B cell (primary cell): ENCODE measurements at regions of chr22 and their contacts with region 1.

Region 1: GRCh38 chr22:38755911-38756532 is at the start of gene SUN2:
- DNase-seq: peak; percentile 94
- ATAC-seq: peak; percentile 74
- H3K4me3 ChIP-seq: peak within 1 kb of the TSS; percentile 59 to 97 (median 82)
- H3K4me3 Mint-ChIP-seq: peak within 1 kb of the TSS; percentile 100
- H3K27ac ChIP-seq: peak within 1 kb of the TSS; percentile 71 to 81
- H3K27ac Mint-ChIP-seq: peak within 1 kb of the TSS; percentile 99
- H3K4me1 ChIP-seq: peaks cover 63 to 82% of the 10 kb centered on the region in 2 donors
- H3K4me1 Mint-ChIP-seq: peaks cover 65% of the 10 kb centered on the region
- H3K27me3 ChIP-seq: no peaks in the 10 kb centered on the region
- H3K27me3 Mint-ChIP-seq: no peaks in the 10 kb centered on the region
- CTCF ChIP-seq: no peak
- total RNA-seq, gene SUN2: 305 and 322 TPM in 2 replicates

Region 2: GRCh38 chr22:38681784-38682335 is 74.2 kb before region 1 on chr22 and contains the start of gene TOMM22:
- CTCF ChIA-PET with region 1: interaction called, 6 read pairs
- POLR2A ChIA-PET with region 1: interaction called, 4 read pairs
- intact Hi-C with region 1: loop called (anchors 2 kb)
- DNase-seq: peak; percentile 91
- ATAC-seq: peak; percentile 98
- H3K4me3 ChIP-seq: peak within 1 kb of the TSS; percentile 78 to 96 (median 87)
- H3K4me3 Mint-ChIP-seq: peak within 1 kb of the TSS; percentile 100
- H3K27ac ChIP-seq: peak within 1 kb of the TSS; percentile 70 to 88
- H3K27ac Mint-ChIP-seq: peak within 1 kb of the TSS; percentile 96
- H3K4me1 ChIP-seq: peaks cover 11 to 15% of the 10 kb centered on the region in 2 donors
- H3K4me1 Mint-ChIP-seq: peaks cover 22% of the 10 kb centered on the region
- H3K27me3 ChIP-seq: no peaks in the 10 kb centered on the region
- H3K27me3 Mint-ChIP-seq: no peaks in the 10 kb centered on the region
- CTCF ChIP-seq: peak; percentile 72
- total RNA-seq, gene TOMM22: 47.6 and 48.2 TPM in 2 replicates

Region 3: DNA sequence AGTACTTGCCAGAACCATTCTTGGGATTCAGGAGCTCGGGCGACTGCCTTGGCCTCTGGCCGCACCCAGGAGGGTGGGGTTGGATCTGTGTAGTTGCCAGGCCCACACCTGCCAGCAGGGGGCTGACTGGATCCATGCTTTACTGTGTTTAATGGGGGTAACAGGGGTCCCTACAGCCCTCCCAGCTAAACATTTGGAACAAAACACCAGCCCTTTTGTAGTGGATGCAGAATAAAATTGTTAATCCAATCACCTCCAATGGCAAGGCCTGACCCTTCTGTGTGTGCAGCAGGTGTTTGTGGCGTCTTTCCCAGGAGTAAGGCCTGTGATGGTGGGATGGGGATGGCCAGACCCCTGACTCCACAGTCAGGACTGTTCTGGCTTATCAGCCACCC is 22.7 kb before region 1 on chr22:
- CTCF ChIA-PET with region 1: interaction called, 14 read pairs
- POLR2A ChIA-PET with region 1: interaction called, 15 read pairs
- intact Hi-C with region 1: no loop called
- DNase-seq: peak; percentile 69
- ATAC-seq: peak; percentile 68
- H3K4me3 ChIP-seq: no peak overlapping the region
- H3K4me3 Mint-ChIP-seq: no peak overlapping the region
- H3K27ac ChIP-seq: peak overlapping the region in 1 of 2 donors; percentile 61
- H3K27ac Mint-ChIP-seq: peak overlapping the region; percentile 78
- H3K4me1 ChIP-seq: peaks cover 0 to 18% of the 10 kb centered on the region in 2 donors
- H3K4me1 Mint-ChIP-seq: peaks cover 33% of the 10 kb centered on the region
- H3K27me3 ChIP-seq: no peaks in the 10 kb centered on the region
- H3K27me3 Mint-ChIP-seq: no peaks in the 10 kb centered on the region
- CTCF ChIP-seq: peak; percentile 84

Region 4: DNA sequence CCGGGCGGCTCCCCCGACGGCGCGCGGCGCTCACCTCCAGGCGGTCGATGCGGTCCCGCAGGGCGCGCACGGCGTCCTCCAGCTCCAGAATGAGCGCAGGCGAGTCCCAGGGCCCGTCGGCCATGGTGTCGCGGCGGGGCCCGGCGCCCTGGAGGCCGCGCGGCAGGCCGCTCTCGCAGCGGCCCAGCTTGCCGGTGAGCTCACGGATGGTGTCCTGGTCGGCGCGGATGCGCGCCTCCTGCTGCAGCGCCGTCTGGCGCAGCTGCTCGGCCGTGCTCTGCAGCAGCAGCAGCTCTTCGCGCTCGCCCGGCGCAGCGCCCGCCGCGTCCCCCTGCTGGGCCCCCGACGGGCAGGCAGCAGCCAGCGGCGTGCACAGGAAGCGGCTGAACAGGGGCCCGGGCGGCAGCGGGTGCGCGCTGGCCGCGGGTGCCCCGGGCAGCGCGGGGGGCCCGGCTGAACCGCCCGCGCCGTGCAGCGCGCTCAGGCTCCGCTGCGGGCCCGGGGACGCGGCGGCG is 87.2 kb after region 1 on chr22:
- CTCF ChIA-PET with region 1: interaction called, 5 read pairs
- POLR2A ChIA-PET with region 1: no interaction called
- intact Hi-C with region 1: loop called (anchors 5 kb)
- DNase-seq: peak; percentile 77
- ATAC-seq: peak; percentile 78
- H3K4me3 ChIP-seq: peak overlapping the region in 2 of 5 experiments; percentile 23 to 29
- H3K4me3 Mint-ChIP-seq: peak overlapping the region; percentile 19
- H3K27ac ChIP-seq: no peak overlapping the region
- H3K27ac Mint-ChIP-seq: no peak overlapping the region
- H3K4me1 ChIP-seq: peaks cover 6 to 13% of the 10 kb centered on the region in 2 donors
- H3K4me1 Mint-ChIP-seq: peaks cover 11% of the 10 kb centered on the region
- H3K27me3 ChIP-seq: peaks cover 0 to 56% (median 27%) of the 10 kb centered on the region in 4 experiments
- H3K27me3 Mint-ChIP-seq: peaks cover 62% of the 10 kb centered on the region
- CTCF ChIP-seq: no peak

Region 5: DNA sequence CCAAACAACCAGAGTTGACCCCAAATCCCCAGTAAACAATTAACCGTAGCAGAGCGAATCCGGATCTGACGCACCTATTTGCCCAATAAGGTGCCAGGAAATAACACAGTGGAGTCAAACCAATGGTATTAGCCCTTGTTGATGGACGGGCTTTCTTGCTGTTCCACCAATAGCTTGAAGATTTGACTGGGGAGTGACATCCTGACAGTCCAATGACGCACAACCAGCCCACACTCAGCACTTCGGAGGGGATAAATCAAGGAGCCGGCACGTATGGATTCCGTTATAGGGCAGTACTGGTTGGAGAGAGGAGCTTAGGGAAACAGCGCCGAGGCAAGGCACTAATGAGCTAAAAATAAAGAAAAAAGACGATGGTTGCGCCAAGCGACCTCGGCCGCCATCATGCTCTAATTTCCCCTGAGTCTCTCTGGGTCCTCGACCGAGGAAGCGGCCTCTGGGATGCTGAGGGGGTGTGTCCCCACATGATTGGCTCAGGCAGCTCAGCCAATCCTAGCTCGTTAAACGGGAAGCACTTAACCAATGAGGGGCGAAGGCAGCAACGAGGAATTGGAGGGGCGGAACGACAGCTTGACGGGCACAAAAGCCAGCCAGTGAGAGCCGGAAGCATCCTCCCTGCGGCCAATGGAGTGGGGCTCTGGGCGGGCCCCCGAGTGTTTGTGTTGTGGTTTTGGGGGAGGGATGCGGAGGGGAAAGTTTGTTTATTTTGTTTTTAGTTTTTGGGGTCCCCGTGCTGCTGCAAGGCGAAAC is 1288.3 kb after region 1 on chr22:
- CTCF ChIA-PET with region 1: no interaction called
- POLR2A ChIA-PET with region 1: no interaction called
- intact Hi-C with region 1: loop called (anchors 2 kb)
- DNase-seq: peak; percentile 99
- ATAC-seq: peak; percentile 84
- H3K4me3 ChIP-seq: peak overlapping the region; percentile 65 to 98 (median 97)
- H3K4me3 Mint-ChIP-seq: peak overlapping the region; percentile 95
- H3K27ac ChIP-seq: peak overlapping the region; percentile 97 to 100
- H3K27ac Mint-ChIP-seq: peak overlapping the region; percentile 99
- H3K4me1 ChIP-seq: peaks cover 39 to 43% of the 10 kb centered on the region in 2 donors
- H3K4me1 Mint-ChIP-seq: peaks cover 40% of the 10 kb centered on the region
- H3K27me3 ChIP-seq: peaks cover 0 to 14% (median 2%) of the 10 kb centered on the region in 4 experiments
- H3K27me3 Mint-ChIP-seq: peaks cover 7% of the 10 kb centered on the region
- CTCF ChIP-seq: no peak